ENCODE measurements at regions of chr3 and their contacts with region 1.

Region 1: GRCh38 chr3:32401556-32402081 is 10.0 kb downstream of the CMTM7 start:
- DNase-seq: peak; percentile 80
- ATAC-seq: peak; percentile 70
- H3K4me3 ChIP-seq: peak overlapping the region; percentile 33 to 75 (median 55)
- H3K4me3 Mint-ChIP-seq: peak overlapping the region; percentile 88
- H3K27ac ChIP-seq: peak overlapping the region; percentile 88 to 94
- H3K27ac Mint-ChIP-seq: peak overlapping the region; percentile 96
- H3K4me1 ChIP-seq: peaks cover 41 to 58% of the 10 kb centered on the region in 2 donors
- H3K4me1 Mint-ChIP-seq: peaks cover 76% of the 10 kb centered on the region
- H3K27me3 ChIP-seq: no peaks in the 10 kb centered on the region
- H3K27me3 Mint-ChIP-seq: no peaks in the 10 kb centered on the region
- CTCF ChIP-seq: no peak

Region 2: DNA sequence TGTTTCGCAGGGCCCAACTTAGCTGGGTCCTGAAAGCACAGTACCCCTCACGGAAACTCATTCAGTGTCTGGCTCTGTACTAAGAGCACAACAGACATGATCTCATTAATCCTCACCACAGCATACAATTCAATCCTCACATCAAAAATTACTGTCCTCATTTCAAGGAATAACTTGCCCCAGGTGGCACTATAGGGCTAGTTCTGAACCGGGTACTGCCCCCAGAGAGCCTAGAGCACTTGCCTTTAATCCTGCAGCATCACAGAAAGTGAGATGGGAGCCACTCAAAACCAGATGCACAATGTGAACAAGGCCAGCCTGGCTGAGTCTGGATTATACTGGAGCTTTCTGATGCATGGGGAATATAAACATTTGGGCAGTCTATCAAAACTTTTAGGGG is 543.2 kb before region 1 on chr3:
- CTCF ChIA-PET with region 1: no interaction called
- POLR2A ChIA-PET with region 1: no interaction called
- intact Hi-C with region 1: no loop called
- DNase-seq: peak; percentile 48
- ATAC-seq: peak; percentile 66
- H3K4me3 ChIP-seq: no peak overlapping the region
- H3K4me3 Mint-ChIP-seq: no peak overlapping the region
- H3K27ac ChIP-seq: peak overlapping the region in 1 of 2 donors; percentile 34
- H3K27ac Mint-ChIP-seq: peak overlapping the region; percentile 53
- H3K4me1 ChIP-seq: peaks cover 49 to 56% of the 10 kb centered on the region in 2 donors
- H3K4me1 Mint-ChIP-seq: peaks cover 65% of the 10 kb centered on the region
- H3K27me3 ChIP-seq: no peaks in the 10 kb centered on the region
- H3K27me3 Mint-ChIP-seq: no peaks in the 10 kb centered on the region
- CTCF ChIP-seq: peak; percentile 59

Region 3: DNA sequence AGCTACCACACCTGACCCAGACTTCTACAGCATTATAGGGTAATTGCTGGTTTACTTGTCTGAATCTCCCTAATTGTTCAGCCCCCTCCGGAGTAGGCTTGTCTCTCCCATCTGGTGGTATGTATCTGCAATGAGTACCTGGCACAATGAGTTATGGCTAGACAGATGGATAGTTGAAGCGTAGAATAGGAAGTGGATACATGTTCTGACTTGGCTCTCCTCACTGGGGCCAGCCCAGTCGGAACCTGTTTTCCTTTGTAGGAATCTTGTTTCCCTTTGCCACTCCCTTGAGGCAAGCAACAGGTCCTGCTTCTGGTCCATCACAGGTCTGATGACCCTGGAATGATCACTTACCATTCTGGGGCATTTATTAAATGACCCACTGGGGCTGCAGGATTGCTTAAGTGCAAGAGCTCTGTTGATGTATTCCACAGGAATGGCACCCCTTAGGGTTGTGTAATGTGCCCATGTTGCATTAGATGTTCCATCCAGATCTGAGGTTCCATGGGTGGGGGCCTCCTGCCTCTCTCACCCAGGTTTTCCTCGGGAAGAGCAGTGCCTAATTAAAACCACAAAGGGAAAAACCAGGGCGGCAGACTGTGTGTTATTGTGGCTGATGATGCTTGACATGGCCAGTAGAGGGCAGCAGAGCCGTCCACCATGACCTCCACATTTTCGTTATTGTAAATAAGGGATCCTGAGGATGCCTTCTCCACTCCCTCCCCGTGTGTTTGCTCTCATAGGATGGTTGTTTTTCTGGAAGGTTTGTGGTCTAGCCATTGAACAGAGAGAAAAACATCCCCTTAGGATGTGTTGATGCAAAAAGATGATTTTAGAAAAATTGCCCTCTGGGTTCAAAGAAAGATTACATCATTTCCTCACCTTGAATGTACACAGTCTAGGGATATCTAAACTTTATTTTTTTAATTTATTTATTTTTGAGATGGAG is 105.1 kb before region 1 on chr3:
- CTCF ChIA-PET with region 1: interaction called, 29 read pairs
- POLR2A ChIA-PET with region 1: no interaction called
- intact Hi-C with region 1: loop called (anchors 1 kb)
- DNase-seq: peak; percentile 74
- ATAC-seq: peak; percentile 64
- H3K4me3 ChIP-seq: no peak overlapping the region
- H3K4me3 Mint-ChIP-seq: no peak overlapping the region
- H3K27ac ChIP-seq: no peak overlapping the region
- H3K27ac Mint-ChIP-seq: no peak overlapping the region
- H3K4me1 ChIP-seq: peaks cover 6 to 7% of the 10 kb centered on the region in 2 donors
- H3K4me1 Mint-ChIP-seq: peaks cover 5% of the 10 kb centered on the region
- H3K27me3 ChIP-seq: no peaks in the 10 kb centered on the region
- H3K27me3 Mint-ChIP-seq: peaks cover 3% of the 10 kb centered on the region
- CTCF ChIP-seq: peak; percentile 94

Region 4: DNA sequence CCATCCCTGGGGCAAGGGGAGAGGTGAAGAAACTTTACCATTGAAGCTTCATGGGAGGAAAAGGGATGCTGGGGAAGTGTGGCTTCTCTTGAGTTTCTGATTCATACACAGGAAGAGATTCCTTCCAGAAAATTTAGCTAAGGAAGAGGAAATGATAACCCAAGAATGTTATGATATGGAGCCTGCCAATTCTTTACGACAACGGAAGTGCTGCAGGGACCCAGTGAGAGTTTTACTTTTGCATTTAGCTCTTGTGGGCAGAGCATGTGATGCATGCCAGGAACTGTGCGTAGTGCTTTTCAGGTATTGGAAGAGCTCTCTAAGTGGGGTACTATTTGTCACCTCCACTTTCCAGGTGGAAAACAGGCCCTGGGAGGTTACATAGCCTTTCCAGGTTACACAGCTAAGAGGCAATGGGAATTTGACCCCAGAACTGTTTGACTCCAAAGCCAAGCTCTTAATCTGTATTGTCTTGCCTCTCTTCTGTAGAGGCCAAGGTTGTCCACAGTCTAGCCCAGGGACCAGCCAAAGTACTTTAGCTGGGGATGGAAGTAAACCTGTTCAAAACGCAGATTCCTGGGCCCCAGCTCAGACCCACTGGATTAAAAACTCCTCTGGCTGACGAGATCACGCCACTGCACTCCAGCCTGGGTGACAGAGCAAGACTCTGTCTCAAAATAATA is 13.0 kb after region 1 on chr3:
- CTCF ChIA-PET with region 1: interaction called, 11 read pairs
- POLR2A ChIA-PET with region 1: interaction called, 3 read pairs
- intact Hi-C with region 1: no loop called
- DNase-seq: peak; percentile 63
- ATAC-seq: peak; percentile 87
- H3K4me3 ChIP-seq: no peak overlapping the region
- H3K4me3 Mint-ChIP-seq: peak overlapping the region; percentile 48
- H3K27ac ChIP-seq: peak overlapping the region; percentile 71 to 73
- H3K27ac Mint-ChIP-seq: peak overlapping the region; percentile 88
- H3K4me1 ChIP-seq: peaks cover 31 to 33% of the 10 kb centered on the region in 2 donors
- H3K4me1 Mint-ChIP-seq: peaks cover 61% of the 10 kb centered on the region
- H3K27me3 ChIP-seq: no peaks in the 10 kb centered on the region
- H3K27me3 Mint-ChIP-seq: no peaks in the 10 kb centered on the region
- CTCF ChIP-seq: no peak

Region 5: DNA sequence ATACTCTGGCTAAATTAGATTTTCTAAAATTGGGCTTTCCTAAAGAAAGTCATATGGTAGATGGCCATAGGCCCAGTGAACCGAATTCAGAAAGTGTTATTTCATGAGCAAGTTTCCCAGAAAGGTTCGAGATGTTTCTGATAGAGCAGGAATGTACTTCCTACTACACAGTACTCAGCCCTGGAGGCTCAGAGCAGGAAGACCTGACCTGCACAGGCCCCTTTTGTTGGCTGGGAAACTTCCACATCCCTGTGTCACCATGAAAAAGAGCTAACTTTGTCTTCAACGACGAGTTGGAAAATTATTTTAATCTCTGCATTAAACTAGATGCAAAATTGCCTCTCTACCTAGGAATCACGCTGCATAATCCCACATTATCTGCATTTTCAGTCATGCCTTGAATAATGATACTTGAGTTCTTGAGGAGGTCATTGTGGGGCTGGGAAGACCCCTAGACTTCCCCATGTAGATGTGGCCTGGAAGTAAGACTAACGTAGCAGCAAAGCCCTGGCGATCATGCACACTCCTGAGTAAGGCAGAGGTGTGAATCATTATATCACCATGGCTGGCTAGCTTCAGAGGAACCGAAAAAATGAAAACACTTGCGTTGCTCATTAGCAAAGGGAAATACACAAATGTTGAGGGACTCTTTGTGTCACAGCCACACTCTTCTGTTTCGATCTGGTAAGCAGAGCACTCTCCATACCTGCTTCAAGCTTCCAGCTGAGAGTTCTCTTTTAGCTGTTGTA is 37.2 kb after region 1 on chr3:
- CTCF ChIA-PET with region 1: interaction called, 10 read pairs
- POLR2A ChIA-PET with region 1: interaction called, 4 read pairs
- intact Hi-C with region 1: loop called (anchors 1 kb)
- DNase-seq: peak; percentile 83
- ATAC-seq: peak; percentile 85
- H3K4me3 ChIP-seq: peak overlapping the region in 1 of 5 experiments; percentile 18
- H3K4me3 Mint-ChIP-seq: peak overlapping the region; percentile 81
- H3K27ac ChIP-seq: peak overlapping the region; percentile 81 to 82
- H3K27ac Mint-ChIP-seq: peak overlapping the region; percentile 96
- H3K4me1 ChIP-seq: peaks cover 68 to 74% of the 10 kb centered on the region in 2 donors
- H3K4me1 Mint-ChIP-seq: peaks cover 78% of the 10 kb centered on the region
- H3K27me3 ChIP-seq: no peaks in the 10 kb centered on the region
- H3K27me3 Mint-ChIP-seq: no peaks in the 10 kb centered on the region
- CTCF ChIP-seq: no peak

Region 6: GRCh38 chr3:32531010-32531647 is 129.5 kb after region 1 on chr3:
- CTCF ChIA-PET with region 1: no interaction called
- POLR2A ChIA-PET with region 1: no interaction called
- intact Hi-C with region 1: no loop called
- DNase-seq: no peak
- ATAC-seq: no peak
- H3K4me3 ChIP-seq: no peak overlapping the region
- H3K4me3 Mint-ChIP-seq: no peak overlapping the region
- H3K27ac ChIP-seq: no peak overlapping the region
- H3K27ac Mint-ChIP-seq: peak overlapping the region; percentile 22
- H3K4me1 ChIP-seq: no peaks in the 10 kb centered on the region
- H3K4me1 Mint-ChIP-seq: no peaks in the 10 kb centered on the region
- H3K27me3 ChIP-seq: no peaks in the 10 kb centered on the region
- H3K27me3 Mint-ChIP-seq: no peaks in the 10 kb centered on the region
- CTCF ChIP-seq: no peak

Region 7: DNA sequence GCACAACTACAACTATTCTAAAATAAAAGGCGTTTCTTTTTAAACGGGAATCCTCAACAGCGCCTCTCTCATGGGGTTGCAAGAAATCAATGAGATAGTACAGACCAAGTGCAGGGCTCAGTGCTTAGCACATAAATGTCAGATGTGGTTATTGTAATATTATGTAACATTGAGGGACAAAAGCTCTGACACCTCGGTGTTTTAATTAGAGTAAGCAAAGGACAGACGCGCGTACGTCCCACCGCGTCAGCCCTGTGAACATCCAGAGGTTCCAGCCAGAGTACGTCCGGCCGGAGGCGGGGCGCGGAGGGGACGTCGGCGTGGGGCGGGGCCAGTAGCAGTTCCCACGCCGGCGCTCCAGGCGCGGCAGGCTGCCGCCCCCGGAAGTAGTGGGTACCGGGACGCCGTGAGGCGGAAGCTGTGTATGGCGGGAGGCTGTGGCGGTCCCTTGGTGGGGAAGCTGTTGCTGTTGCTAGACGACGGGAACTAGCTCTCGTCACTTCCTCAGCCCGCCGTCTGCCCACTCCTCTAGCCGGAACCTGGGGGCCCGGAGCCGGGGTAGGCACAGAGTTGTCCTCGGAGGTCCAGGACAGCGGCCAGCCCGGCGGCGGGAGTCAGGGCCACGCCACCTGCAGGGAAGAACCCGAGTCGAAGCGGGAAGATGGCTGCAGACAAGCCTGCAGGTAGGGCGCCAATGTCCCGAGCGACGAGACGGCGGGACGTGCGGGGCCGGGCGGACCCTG is 283.4 kb after region 1 on chr3 and contains the start of gene CNOT10:
- CTCF ChIA-PET with region 1: no interaction called
- POLR2A ChIA-PET with region 1: no interaction called
- intact Hi-C with region 1: loop called (anchors 5 kb)
- DNase-seq: peak; percentile 97
- ATAC-seq: peak; percentile 93
- H3K4me3 ChIP-seq: peak within 1 kb of the TSS; percentile 76 to 97 (median 88)
- H3K4me3 Mint-ChIP-seq: peak within 1 kb of the TSS; percentile 95
- H3K27ac ChIP-seq: peak within 1 kb of the TSS; percentile 77 to 95
- H3K27ac Mint-ChIP-seq: peak within 1 kb of the TSS; percentile 95
- H3K4me1 ChIP-seq: peaks cover 19 to 20% of the 10 kb centered on the region in 2 donors
- H3K4me1 Mint-ChIP-seq: peaks cover 36% of the 10 kb centered on the region
- H3K27me3 ChIP-seq: no peaks in the 10 kb centered on the region
- H3K27me3 Mint-ChIP-seq: no peaks in the 10 kb centered on the region
- CTCF ChIP-seq: no peak
- total RNA-seq, gene CNOT10: 66.2 and 69.0 TPM in 2 replicates

Measured in B cell (primary cell).